ENCODE measurements at regions of chr4 and their contacts with region 1.

Region 1: GRCh38 chr4:37977471-37978247 is 17.5 kb downstream of the PTTG2 start:
- DNase-seq: peak; percentile 90

Region 2: GRCh38 chr4:37802068-37802666 is 175.5 kb before region 1 on chr4:
- intact Hi-C with region 1: loop called (anchors 5 kb)
- DNase-seq: no peak

Region 3: DNA sequence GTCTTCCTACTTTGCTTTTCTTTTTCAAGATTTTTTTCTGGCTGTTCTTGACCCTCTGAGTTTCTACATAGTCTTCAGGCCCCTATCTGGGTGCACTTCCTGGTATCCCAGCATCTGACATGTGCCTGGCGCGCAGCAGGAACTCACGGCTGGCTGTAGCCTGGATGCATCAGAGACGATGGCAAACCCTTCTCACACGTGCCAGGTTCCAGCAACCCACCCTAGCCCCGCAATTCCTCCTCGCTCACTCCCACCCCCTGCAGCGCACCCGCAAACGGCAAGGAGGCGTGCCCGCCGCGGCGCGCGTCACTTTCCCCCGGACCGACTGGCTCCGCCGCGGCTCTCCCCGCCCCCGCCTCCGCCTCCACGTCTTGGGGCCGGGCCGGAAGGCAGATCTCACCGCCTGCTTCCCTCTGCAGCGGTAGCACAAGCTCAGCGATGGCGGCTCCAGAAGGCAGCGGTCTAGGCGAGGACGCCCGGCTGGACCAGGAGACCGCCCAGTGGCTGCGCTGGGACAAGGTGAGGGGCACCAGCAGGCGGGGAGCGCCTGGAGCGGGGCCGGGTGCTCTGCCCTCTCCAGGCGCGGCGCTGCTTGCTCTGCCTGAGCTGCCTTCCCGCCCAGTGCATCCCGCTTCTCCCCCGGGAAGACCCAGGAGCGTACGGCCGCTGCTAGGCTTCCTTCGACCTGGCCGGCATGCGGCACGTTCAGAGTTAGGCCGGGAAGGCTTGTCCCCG is 151.2 kb before region 1 on chr4 and contains the start of gene PGM2:
- intact Hi-C with region 1: loop called (anchors 2 kb)
- DNase-seq: peak; percentile 97
- total RNA-seq, gene PGM2: 9.5 TPM

Region 4: DNA sequence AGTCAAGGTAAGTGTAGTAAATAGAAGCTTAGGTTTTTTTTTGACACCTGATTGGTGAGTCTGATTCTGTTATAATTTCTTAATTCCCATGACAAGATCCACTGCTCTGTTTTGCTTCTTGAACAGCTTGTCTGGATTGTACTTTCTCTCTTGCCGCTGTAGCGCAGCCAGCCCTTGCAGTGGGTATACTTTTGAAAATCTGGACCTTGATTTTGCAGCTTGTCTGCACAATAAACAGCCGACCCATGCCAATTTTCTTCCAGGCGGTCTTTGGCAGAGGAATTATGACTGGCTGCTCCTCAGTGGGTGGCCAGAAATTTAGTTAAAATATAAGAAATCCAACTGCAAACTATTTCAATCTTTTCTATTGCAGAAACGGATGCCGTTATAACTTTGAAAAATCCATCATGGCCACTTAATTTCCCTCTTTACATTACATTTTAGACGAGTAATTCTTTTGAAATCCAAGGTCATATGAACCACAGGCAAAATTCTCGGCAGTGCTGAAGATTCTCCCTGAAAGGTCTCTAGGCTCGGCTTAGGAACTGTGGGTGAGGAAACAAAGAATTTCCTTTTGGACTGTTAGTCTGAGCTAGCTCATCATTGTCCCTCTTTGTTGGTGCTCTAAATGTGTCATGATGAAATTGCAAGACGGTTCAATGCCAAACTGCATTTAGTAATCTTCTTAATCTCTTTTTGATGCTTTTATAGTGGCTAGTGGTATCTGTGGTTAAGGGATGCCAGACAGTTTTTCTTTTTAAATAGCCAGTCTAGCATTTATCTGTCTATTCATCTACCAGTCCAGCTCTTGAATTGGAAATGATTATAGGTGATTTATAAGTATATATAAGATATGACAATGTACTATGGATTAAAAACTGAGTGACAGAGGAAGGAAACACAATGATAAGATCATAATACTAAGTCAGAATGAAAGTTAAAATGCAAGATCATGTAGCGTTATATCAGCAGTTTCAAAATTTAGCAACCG is 48.9 kb before region 1 on chr4:
- intact Hi-C with region 1: no loop called
- DNase-seq: no peak

Region 5: GRCh38 chr4:38034986-38035882 is 57.6 kb after region 1 on chr4:
- intact Hi-C with region 1: loop called (anchors 2 kb)
- DNase-seq: no peak

Region 6: GRCh38 chr4:38062088-38062893 is 84.6 kb after region 1 on chr4:
- intact Hi-C with region 1: no loop called
- DNase-seq: no peak

Region 7: DNA sequence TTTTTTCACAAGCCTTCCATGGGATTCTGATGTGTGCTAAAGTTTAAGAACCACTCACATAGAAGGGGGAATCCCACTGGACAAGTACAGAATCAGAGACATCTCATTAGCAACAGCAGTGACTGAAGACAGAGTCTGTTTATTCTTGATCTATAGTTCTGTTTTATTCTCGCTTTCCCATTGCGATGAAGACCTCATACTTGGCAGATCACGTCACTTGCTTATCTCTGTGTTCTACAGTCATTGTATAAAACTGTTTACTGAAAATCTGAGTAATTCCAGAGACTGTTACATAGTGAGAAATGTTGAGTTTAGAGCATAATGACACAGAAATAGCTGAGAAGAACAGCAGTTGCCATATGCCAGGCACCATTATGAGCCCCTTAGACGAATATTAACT is 168.1 kb after region 1 on chr4:
- intact Hi-C with region 1: no loop called
- DNase-seq: no peak

Measured in cardiac septum (tissue), 1 donor.